Astrocyte of the cerebellum (primary cell): ENCODE measurements at regions of chr2 and their contacts with region 1.

Region 1: DNA sequence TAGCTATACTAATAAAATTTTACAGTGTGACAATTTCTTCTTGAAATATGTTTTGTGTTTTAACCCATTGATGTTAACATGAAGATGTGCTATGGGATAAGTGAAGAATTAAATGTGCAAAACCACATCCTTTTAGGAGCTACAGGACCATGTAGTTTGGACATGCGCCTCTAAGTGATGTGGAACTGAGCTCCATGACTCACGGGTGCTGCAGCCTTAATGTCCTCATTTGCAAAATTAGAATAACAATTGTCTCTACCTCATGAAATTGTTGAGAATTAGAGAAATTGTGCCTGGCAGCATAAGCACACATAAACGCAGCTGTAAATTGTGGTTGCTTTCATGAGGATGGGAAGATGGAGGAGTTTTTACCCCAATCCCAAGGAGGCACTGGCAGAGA is 31.6 kb upstream of the TPO start:
- DNase-seq: no peak
- H3K4me3 ChIP-seq: no peak overlapping the region
- CTCF ChIP-seq: no peak

Region 2: GRCh38 chr2:1348789-1349188 is 32.9 kb before region 1 on chr2:
- in situ Hi-C with region 1: loop called (anchors 5 kb)
- DNase-seq: no peak
- H3K4me3 ChIP-seq: no peak overlapping the region
- CTCF ChIP-seq: no peak

Region 3: GRCh38 chr2:1431886-1432400 is 50.3 kb after region 1 on chr2:
- in situ Hi-C with region 1: no loop called
- DNase-seq: no peak
- H3K4me3 ChIP-seq: no peak overlapping the region
- CTCF ChIP-seq: no peak